ENCODE measurements at regions of chr11 and their contacts with region 1.

Region 1: DNA sequence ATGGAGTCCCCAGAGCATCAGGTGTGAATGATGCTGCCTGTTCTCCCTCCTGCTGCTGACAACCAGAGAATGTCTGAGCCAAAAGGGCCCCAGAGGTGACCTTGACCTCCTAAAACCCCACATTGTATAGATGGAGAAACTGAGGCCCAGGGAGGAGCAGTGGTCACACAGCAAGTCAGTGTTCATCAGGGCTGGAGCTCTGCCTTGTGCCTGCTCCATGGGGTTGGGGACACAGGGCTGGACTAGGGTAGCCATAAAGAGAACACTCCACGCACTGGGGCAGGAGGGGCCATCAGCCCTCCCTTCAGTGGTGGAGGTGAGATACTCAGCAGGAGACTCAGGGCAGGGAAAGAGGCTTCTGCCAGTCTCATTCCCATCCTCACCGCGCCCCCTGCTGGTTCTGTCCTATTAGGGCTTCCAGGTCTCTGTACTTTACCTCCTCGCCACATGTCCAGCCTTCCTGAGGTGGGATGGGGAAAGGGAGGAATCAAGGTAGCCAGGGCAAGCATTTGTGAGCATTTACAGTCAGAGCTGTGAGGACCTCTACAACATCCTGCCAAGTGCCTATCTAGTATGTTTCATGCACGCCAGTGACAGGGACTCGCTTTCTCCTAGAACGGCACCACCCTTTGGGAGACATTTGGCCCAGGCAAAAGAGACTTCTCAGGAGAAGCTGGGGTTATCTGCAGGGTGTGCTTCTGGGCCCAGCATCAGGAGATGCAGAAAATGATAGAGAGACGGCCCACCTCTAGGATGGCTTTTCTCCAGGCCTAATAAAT is 43.2 kb downstream of the NEU3 start:
- DNase-seq: peak in 8 of 9 donors; percentile 14 to 65 (median 38)
- ATAC-seq: peak; percentile 57
- H3K4me3 ChIP-seq: no peak overlapping the region
- H3K4me3 Mint-ChIP-seq: no peak overlapping the region
- H3K27ac ChIP-seq: no peak overlapping the region
- H3K27ac Mint-ChIP-seq: no peak overlapping the region
- H3K4me1 ChIP-seq: no peaks in the 10 kb centered on the region
- H3K4me1 Mint-ChIP-seq: peaks cover 0 to 5% (median 0%) of the 10 kb centered on the region in 7 donors
- H3K27me3 ChIP-seq: no peaks in the 10 kb centered on the region
- H3K27me3 Mint-ChIP-seq: no peaks in the 10 kb centered on the region

Region 2: DNA sequence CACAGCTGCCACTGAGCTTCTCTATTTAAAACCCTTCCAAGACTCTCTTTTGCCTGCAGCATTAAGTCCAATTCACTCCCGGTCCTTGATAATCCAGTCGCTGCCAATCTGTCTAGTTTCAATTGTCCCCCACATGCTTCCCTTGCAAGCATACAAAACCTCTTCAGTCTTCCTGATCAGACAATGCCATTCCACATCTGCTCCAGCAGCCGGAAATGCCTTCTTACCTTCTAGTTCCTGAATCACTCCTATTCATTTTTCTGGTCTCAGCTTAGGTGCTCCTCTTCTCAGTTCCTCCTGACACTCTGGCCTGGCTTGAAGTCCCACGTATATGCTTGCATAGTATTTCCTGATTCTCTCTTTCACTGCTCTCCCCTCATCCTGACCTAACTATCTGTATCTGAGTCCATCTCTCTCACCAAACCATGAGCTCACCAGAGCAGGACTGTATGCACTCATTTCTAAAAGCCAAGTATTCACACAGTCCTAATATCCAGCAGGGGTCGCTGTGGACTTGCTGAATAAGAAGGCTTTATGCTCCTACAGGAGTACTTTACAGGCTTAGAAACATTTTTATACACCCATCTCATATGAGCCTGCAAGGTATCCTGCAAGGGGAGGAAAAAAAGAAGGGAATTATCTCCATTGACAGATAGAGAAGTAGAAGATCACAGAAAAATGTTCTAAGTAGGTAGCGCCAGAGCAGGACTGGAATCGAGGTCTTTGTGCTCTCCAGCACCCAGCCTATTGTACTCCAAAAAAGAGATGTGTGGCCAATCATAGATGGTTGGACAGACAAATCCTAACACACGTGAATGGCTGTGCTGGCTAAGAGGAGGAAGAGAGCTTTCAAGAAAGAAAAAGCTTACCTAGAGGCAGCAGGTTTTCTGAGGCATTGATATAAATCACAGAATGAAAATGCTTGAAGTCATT is 102.3 kb before region 1 on chr11:
- CTCF ChIA-PET with region 1: interaction called, 4 read pairs
- POLR2A ChIA-PET with region 1: no interaction called
- intact Hi-C with region 1: loop called in 1 of 2 experiments (anchors 1 kb)
- DNase-seq: peak; percentile 9 to 74 (median 59)
- ATAC-seq: peak; percentile 92
- H3K4me3 ChIP-seq: no peak overlapping the region
- H3K4me3 Mint-ChIP-seq: no peak overlapping the region
- H3K27ac ChIP-seq: no peak overlapping the region
- H3K27ac Mint-ChIP-seq: no peak overlapping the region
- H3K4me1 ChIP-seq: no peaks in the 10 kb centered on the region
- H3K4me1 Mint-ChIP-seq: peaks cover 0 to 36% (median 0%) of the 10 kb centered on the region in 7 donors
- H3K27me3 ChIP-seq: no peaks in the 10 kb centered on the region
- H3K27me3 Mint-ChIP-seq: no peaks in the 10 kb centered on the region